Psoas muscle (tissue), 8 donors: ENCODE measurements at regions of chr6 and their contacts with region 1.

Region 1: GRCh38 chr6:106300944-106301343 is 24.6 kb downstream of the ATG5 start:
- DNase-seq: no peak
- ATAC-seq: peak in 2 of 4 donors; percentile 58 to 73
- H3K4me3 ChIP-seq: no peak overlapping the region
- H3K27ac ChIP-seq: no peak overlapping the region
- H3K4me1 ChIP-seq: no peaks in the 10 kb centered on the region
- H3K27me3 ChIP-seq: no peaks in the 10 kb centered on the region
- CTCF ChIP-seq: peak; percentile 56

Region 2: DNA sequence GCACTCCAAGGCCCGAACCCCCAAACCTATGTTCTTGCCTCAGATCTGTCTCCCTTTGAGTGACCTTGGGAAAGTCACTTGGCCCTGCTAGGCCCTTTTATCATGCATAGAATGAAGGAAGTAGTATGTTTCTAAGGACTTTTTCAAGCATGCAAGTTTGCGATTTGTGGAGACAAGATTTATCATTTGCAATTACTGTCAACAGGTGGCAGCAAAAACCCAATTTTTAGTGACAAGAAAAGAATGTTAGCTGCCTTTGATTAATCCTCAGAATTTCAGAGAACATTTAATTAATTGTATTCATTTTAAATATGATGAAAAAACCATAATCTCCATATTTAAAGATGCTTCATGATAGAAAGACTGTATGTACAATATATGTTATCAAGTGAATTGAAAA is 869.7 kb before region 1 on chr6:
- intact Hi-C with region 1: loop called (anchors 5 kb)
- DNase-seq: no peak
- ATAC-seq: no peak
- H3K4me3 ChIP-seq: no peak overlapping the region
- H3K27ac ChIP-seq: no peak overlapping the region
- H3K4me1 ChIP-seq: no peaks in the 10 kb centered on the region
- H3K27me3 ChIP-seq: peaks cover 0 to 3% (median 0%) of the 10 kb centered on the region in 3 donors
- CTCF ChIP-seq: peak; percentile 51

Region 3: DNA sequence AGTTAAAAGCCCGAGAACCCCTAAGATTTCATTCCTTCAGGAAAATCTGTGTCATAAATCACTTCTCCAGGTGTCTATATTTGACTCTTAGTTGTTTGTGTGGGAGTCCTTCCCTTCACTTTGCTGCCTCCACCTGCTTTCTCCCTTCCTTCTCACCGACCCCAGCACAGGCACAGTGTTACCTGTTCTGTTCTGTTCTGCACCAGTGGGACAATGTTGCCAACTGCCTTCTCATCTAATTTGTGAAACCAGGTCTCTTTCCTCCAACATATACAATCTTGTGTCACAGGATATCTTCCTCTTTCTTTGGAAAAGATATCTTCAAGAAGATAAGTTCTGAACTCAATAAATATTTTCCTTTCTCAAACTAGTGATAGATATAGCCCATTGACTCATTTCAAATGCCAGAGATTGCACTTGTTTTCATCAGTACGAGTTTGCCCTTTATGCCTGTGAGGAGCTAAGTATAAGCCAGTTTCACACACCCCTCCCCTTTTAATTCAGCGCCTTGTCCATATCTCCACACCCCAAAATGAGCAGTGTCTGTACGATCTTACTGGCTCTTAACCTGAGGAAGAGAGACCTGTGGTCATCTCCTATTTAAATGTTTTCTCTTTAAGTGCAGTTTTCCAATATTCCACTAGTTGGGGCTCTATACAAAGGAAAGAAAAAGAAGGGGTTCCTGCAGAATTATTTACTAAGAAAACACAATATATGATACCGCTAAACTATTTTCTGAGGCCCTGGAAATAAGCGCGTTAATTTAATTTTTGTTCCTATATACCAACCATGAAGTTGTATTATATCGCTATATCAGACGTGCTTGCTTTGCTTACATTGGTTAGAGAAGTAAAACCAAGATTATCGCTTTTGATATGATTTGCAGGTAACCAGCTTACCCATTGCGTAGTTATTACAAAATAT is 816.4 kb before region 1 on chr6:
- intact Hi-C with region 1: loop called (anchors 5 to 10 kb)
- DNase-seq: no peak
- ATAC-seq: peak in 2 of 4 donors; percentile 23 to 70
- H3K4me3 ChIP-seq: peak overlapping the region; percentile 5
- H3K27ac ChIP-seq: no peak overlapping the region
- H3K4me1 ChIP-seq: no peaks in the 10 kb centered on the region
- H3K27me3 ChIP-seq: no peaks in the 10 kb centered on the region
- CTCF ChIP-seq: peak; percentile 84

Region 4: GRCh38 chr6:105733565-105734162 is 567.3 kb before region 1 on chr6:
- intact Hi-C with region 1: loop called in 1 of 2 experiments (anchors 5 kb)
- DNase-seq: no peak
- ATAC-seq: no peak
- H3K4me3 ChIP-seq: no peak overlapping the region
- H3K27ac ChIP-seq: no peak overlapping the region
- H3K4me1 ChIP-seq: no peaks in the 10 kb centered on the region
- H3K27me3 ChIP-seq: no peaks in the 10 kb centered on the region
- CTCF ChIP-seq: peak; percentile 63

Region 5: GRCh38 chr6:106125925-106126435 is 175.0 kb before region 1 on chr6:
- intact Hi-C with region 1: no loop called
- DNase-seq: no peak
- ATAC-seq: no peak
- H3K4me3 ChIP-seq: no peak overlapping the region
- H3K27ac ChIP-seq: no peak overlapping the region
- H3K4me1 ChIP-seq: no peaks in the 10 kb centered on the region
- H3K27me3 ChIP-seq: no peaks in the 10 kb centered on the region
- CTCF ChIP-seq: no peak

Region 6: DNA sequence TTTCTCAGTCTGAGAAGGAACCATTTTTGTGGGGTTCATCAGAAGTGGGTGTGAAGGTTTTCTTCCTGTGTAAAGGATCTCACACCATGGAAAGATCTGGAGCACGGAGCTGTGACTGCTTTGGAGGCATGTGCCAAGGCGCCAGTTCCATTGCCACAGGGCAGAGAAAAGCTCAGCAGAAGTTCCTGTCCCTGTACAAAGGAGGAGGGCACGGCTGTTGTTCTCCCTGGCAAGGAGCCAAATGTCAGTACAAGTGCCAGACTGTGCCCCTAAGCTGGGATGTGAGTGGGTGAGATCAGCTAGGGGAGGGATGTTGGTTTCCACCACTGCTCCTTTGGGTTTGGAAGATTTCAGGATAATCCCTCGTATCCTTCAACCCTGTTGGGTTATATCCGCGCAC is 176.8 kb after region 1 on chr6:
- intact Hi-C with region 1: no loop called
- DNase-seq: no peak
- ATAC-seq: no peak
- H3K4me3 ChIP-seq: no peak overlapping the region
- H3K27ac ChIP-seq: no peak overlapping the region
- H3K4me1 ChIP-seq: no peaks in the 10 kb centered on the region
- H3K27me3 ChIP-seq: peaks cover 0 to 12% (median 0%) of the 10 kb centered on the region in 3 donors
- CTCF ChIP-seq: no peak